Astrocyte of the spinal cord (primary cell): ENCODE measurements at regions of chr2 and their contacts with region 1.

Region 1: GRCh38 chr2:235116885-235117492 is 165.2 kb downstream of the SH3BP4 start:
- DNase-seq: peak; percentile 67
- H3K4me3 ChIP-seq: no peak overlapping the region
- CTCF ChIP-seq: peak; percentile 48

Region 2: DNA sequence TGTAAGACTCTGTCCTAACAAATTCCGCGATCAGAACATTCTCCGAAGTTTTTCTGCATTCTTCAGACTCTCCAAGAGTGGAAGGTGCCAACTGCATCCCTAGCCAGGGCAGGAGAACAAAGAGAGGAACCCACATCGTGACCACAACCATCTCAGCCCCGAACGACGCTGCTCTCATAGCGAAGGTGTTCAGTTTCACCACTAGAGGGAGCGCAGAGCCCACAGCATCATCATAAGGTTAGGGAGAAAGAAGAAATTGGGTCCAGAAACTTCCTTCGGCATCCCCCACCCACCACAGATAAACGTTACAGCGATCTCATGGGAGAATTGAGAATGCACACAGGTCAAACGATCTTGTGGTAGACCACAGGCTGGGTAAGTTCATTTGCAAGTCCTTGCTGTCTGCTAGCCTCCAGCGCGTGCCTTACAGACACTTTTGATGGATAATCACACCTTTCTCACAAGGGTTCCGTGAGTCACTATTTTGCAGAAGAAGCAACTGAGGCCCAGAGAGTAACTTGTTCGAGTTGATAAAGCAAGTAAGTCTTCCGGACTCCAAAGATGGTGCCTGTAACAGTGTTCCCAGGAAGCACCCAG is 566.4 kb before region 1 on chr2:
- in situ Hi-C with region 1: loop called (anchors 10 kb)
- DNase-seq: peak; percentile 94
- H3K4me3 ChIP-seq: no peak overlapping the region
- CTCF ChIP-seq: peak; percentile 93